ENCODE measurements at regions of chr15 and their contacts with region 1.

Region 1: DNA sequence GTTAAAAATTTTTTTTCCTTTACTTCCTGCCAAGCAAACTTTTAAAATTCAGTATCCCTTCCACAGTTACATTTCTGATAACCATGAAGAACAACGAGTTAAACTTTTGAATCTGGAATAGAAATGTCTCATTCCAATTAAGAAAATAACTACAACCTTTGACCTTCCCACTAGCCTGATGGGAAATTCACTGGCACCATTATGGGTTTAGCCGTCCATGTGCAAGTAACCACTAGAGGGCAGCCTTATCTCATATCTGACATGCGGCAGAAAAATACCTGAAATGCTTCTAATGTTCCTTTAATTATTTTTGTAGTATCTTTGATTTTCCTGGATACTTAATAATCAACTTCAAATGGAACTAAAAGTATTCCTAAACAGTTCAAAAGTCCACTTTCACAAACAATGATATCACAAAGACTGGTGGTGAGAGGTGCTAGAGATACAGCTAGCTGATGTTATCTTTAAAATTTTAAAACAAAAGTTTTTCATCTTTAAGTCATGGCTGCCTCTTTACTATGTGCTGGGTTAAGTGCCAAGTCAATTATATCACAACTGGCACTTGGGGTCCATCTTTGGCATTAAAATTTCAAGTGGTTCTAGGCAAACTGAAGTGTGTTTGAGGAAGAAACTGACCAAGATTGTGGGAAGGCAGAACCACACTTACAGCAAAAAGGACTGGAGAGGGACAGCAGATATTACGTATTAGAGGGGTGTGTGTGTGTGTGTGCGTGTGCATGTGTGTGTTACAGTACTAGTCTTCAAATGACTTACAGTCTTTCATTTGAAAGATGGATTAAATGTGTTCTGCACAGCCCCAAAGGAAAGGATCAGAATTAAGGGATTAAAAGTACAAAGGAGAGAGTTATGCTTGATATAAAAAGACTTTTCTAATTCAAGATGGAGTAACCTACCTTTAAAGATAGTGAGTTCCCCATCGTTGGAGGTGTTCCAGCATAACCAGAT is 107.1 kb upstream of the ICE2 start:
- DNase-seq: peak in 6 of 9 experiments; percentile 63 to 90 (median 66)
- ATAC-seq: peak; percentile 13
- H3K4me3 ChIP-seq: no peak overlapping the region
- H3K4me3 Mint-ChIP-seq: peak overlapping the region; percentile 77
- H3K27ac ChIP-seq: peak overlapping the region in 1 of 2 experiments; percentile 85
- H3K27ac Mint-ChIP-seq: peak overlapping the region; percentile 92
- H3K4me1 ChIP-seq: peaks cover 89% of the 10 kb centered on the region
- H3K4me1 Mint-ChIP-seq: peaks cover 91% of the 10 kb centered on the region
- H3K27me3 ChIP-seq: no peaks in the 10 kb centered on the region
- H3K27me3 Mint-ChIP-seq: no peaks in the 10 kb centered on the region
- CTCF ChIP-seq: peak; percentile 83

Region 2: GRCh38 chr15:59751552-59752413 is 834.2 kb before region 1 on chr15:
- CTCF ChIA-PET with region 1: no interaction called
- POLR2A ChIA-PET with region 1: no interaction called
- intact Hi-C with region 1: no loop called
- DNase-seq: peak in 2 of 9 experiments; percentile 69 to 81
- ATAC-seq: peak; percentile 98
- H3K4me3 ChIP-seq: no peak overlapping the region
- H3K4me3 Mint-ChIP-seq: no peak overlapping the region
- H3K27ac ChIP-seq: no peak overlapping the region
- H3K27ac Mint-ChIP-seq: peak overlapping the region; percentile 49
- H3K4me1 ChIP-seq: peaks cover 6% of the 10 kb centered on the region
- H3K4me1 Mint-ChIP-seq: peaks cover 9% of the 10 kb centered on the region
- H3K27me3 ChIP-seq: no peaks in the 10 kb centered on the region
- H3K27me3 Mint-ChIP-seq: peaks cover 3% of the 10 kb centered on the region
- CTCF ChIP-seq: peak; percentile 95

Region 3: GRCh38 chr15:59792359-59792758 is 793.7 kb before region 1 on chr15:
- CTCF ChIA-PET with region 1: no interaction called
- POLR2A ChIA-PET with region 1: no interaction called
- intact Hi-C with region 1: loop called in 1 of 2 experiments (anchors 10 kb)
- DNase-seq: peak in 7 of 9 experiments; percentile 37 to 68 (median 49)
- ATAC-seq: peak; percentile 75
- H3K4me3 ChIP-seq: peak overlapping the region in 1 of 2 experiments; percentile 40
- H3K4me3 Mint-ChIP-seq: peak overlapping the region; percentile 79
- H3K27ac ChIP-seq: peak overlapping the region; percentile 2 to 8
- H3K27ac Mint-ChIP-seq: peak overlapping the region; percentile 93
- H3K4me1 ChIP-seq: peaks cover 47% of the 10 kb centered on the region
- H3K4me1 Mint-ChIP-seq: peaks cover 61% of the 10 kb centered on the region
- H3K27me3 ChIP-seq: no peaks in the 10 kb centered on the region
- H3K27me3 Mint-ChIP-seq: no peaks in the 10 kb centered on the region
- CTCF ChIP-seq: no peak

Region 4: GRCh38 chr15:60526127-60526625 is 59.9 kb before region 1 on chr15:
- CTCF ChIA-PET with region 1: interaction called, 47 read pairs
- POLR2A ChIA-PET with region 1: interaction called, 14 read pairs
- intact Hi-C with region 1: loop called (anchors 2 to 5 kb)
- DNase-seq: peak in 4 of 9 experiments; percentile 33 to 76 (median 60)
- ATAC-seq: peak; percentile 55
- H3K4me3 ChIP-seq: no peak overlapping the region
- H3K4me3 Mint-ChIP-seq: no peak overlapping the region
- H3K27ac ChIP-seq: peak overlapping the region in 1 of 2 experiments; percentile 67
- H3K27ac Mint-ChIP-seq: peak overlapping the region; percentile 94
- H3K4me1 ChIP-seq: peaks cover 28% of the 10 kb centered on the region
- H3K4me1 Mint-ChIP-seq: peaks cover 76% of the 10 kb centered on the region
- H3K27me3 ChIP-seq: no peaks in the 10 kb centered on the region
- H3K27me3 Mint-ChIP-seq: no peaks in the 10 kb centered on the region
- CTCF ChIP-seq: no peak

Region 5: GRCh38 chr15:60557191-60557618 is 28.8 kb before region 1 on chr15:
- CTCF ChIA-PET with region 1: interaction called, 36 read pairs
- POLR2A ChIA-PET with region 1: interaction called, 8 read pairs
- intact Hi-C with region 1: no loop called
- DNase-seq: peak in 3 of 9 experiments; percentile 31 to 72 (median 57)
- ATAC-seq: peak; percentile 81
- H3K4me3 ChIP-seq: no peak overlapping the region
- H3K4me3 Mint-ChIP-seq: peak overlapping the region; percentile 42
- H3K27ac ChIP-seq: peak overlapping the region; percentile 4 to 57
- H3K27ac Mint-ChIP-seq: peak overlapping the region; percentile 85
- H3K4me1 ChIP-seq: peaks cover 57% of the 10 kb centered on the region
- H3K4me1 Mint-ChIP-seq: peaks cover 78% of the 10 kb centered on the region
- H3K27me3 ChIP-seq: no peaks in the 10 kb centered on the region
- H3K27me3 Mint-ChIP-seq: no peaks in the 10 kb centered on the region
- CTCF ChIP-seq: no peak

Region 6: DNA sequence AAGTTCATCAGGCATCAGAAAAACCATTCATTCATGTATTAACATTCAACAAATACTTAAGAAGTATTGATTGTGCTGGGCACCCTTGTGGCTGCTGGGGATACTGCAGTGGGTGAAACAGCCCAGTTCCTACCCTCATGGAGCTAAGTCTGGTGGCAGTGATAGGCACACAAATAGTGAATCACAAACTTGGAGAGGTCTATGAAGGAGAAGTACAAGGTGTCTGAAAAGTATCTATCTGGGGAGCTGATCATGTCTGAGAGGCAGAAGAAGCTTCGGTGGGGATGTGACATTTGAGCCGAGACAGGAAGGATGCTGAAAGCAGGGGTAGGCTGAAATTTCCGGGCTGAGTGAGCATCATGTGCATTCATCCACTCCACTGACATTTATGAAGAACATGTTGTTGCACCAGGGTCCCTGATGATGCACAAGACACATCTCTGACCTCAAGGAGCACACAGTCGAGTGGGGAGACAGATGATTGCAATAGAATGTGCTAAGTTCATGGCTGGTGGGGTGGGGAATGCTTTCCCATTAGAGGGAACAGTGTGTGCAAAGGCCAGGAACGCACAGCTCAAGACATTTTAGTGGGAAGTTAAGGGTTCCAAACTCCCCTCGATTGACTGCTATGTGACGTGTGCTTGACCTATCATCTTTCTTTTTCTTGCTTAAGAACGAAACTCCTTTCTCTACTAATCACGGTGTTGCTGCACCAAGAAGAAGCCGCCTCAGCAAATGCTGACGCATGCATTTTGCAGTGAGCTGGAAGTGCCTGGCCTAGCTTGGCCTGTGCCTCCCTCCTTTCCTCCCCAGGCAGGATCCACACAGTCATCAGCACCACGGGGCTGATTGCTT is 202.0 kb after region 1 on chr15:
- CTCF ChIA-PET with region 1: interaction called, 12 read pairs
- POLR2A ChIA-PET with region 1: no interaction called
- intact Hi-C with region 1: no loop called
- DNase-seq: peak in 6 of 9 experiments; percentile 27 to 53 (median 42)
- ATAC-seq: peak; percentile 76
- H3K4me3 ChIP-seq: no peak overlapping the region
- H3K4me3 Mint-ChIP-seq: peak overlapping the region; percentile 13
- H3K27ac ChIP-seq: no peak overlapping the region
- H3K27ac Mint-ChIP-seq: peak overlapping the region; percentile 74
- H3K4me1 ChIP-seq: peaks cover 5% of the 10 kb centered on the region
- H3K4me1 Mint-ChIP-seq: peaks cover 14% of the 10 kb centered on the region
- H3K27me3 ChIP-seq: no peaks in the 10 kb centered on the region
- H3K27me3 Mint-ChIP-seq: no peaks in the 10 kb centered on the region
- CTCF ChIP-seq: peak; percentile 50

Region 7: GRCh38 chr15:60905587-60905986 is 319.6 kb after region 1 on chr15:
- CTCF ChIA-PET with region 1: interaction called, 24 read pairs
- POLR2A ChIA-PET with region 1: interaction called, 3 read pairs
- intact Hi-C with region 1: no loop called
- DNase-seq: peak in 8 of 9 experiments; percentile 2 to 61 (median 34)
- ATAC-seq: peak; percentile 52
- H3K4me3 ChIP-seq: no peak overlapping the region
- H3K4me3 Mint-ChIP-seq: no peak overlapping the region
- H3K27ac ChIP-seq: no peak overlapping the region
- H3K27ac Mint-ChIP-seq: no peak overlapping the region
- H3K4me1 ChIP-seq: peaks cover 32% of the 10 kb centered on the region
- H3K4me1 Mint-ChIP-seq: peaks cover 31% of the 10 kb centered on the region
- H3K27me3 ChIP-seq: no peaks in the 10 kb centered on the region
- H3K27me3 Mint-ChIP-seq: no peaks in the 10 kb centered on the region
- CTCF ChIP-seq: no peak

Region 8: GRCh38 chr15:61099030-61099800 is 513.2 kb after region 1 on chr15:
- CTCF ChIA-PET with region 1: no interaction called
- POLR2A ChIA-PET with region 1: no interaction called
- intact Hi-C with region 1: no loop called
- DNase-seq: no peak
- ATAC-seq: no peak
- H3K4me3 ChIP-seq: no peak overlapping the region
- H3K4me3 Mint-ChIP-seq: no peak overlapping the region
- H3K27ac ChIP-seq: no peak overlapping the region
- H3K27ac Mint-ChIP-seq: no peak overlapping the region
- H3K4me1 ChIP-seq: no peaks in the 10 kb centered on the region
- H3K4me1 Mint-ChIP-seq: no peaks in the 10 kb centered on the region
- H3K27me3 ChIP-seq: no peaks in the 10 kb centered on the region
- H3K27me3 Mint-ChIP-seq: peaks cover 36% of the 10 kb centered on the region
- CTCF ChIP-seq: no peak

Region 9: DNA sequence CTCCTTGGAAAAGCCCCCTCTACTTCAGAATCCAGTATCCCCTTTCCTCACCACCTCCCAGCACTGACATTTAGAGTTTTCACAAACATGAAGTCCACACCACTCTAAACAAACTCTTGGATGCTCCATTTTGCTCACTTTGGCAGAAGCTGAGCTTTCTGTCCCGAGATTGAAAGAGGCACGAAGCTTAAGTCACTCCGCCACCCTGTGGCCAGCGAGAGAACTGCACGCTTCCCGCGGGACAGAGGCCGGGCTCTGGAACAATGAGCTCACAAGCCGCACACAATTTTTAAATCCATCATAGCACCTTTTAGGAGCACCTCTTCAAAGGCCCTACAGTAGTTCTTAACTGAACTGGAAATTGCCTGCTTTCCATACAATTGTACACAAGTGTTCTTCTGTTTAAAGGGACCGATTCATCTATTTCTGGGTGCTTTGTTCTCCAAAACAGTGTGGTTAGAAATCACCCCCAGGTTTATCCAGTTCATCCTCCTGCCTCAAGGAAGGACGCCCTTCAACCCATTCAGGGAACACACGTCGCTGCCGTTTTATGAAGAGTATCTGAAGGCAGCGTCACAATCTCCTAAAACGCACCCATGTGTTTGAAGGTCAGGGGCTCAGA is 1248.2 kb after region 1 on chr15:
- CTCF ChIA-PET with region 1: interaction called, 3 read pairs
- POLR2A ChIA-PET with region 1: no interaction called
- intact Hi-C with region 1: loop called in 1 of 2 experiments (anchors 5 kb)
- DNase-seq: peak; percentile 39 to 78 (median 71)
- ATAC-seq: peak; percentile 85
- H3K4me3 ChIP-seq: no peak overlapping the region
- H3K4me3 Mint-ChIP-seq: no peak overlapping the region
- H3K27ac ChIP-seq: no peak overlapping the region
- H3K27ac Mint-ChIP-seq: no peak overlapping the region
- H3K4me1 ChIP-seq: no peaks in the 10 kb centered on the region
- H3K4me1 Mint-ChIP-seq: peaks cover 8% of the 10 kb centered on the region
- H3K27me3 ChIP-seq: peaks cover 0 to 4% of the 10 kb centered on the region in 2 experiments
- H3K27me3 Mint-ChIP-seq: peaks cover 22% of the 10 kb centered on the region
- CTCF ChIP-seq: peak; percentile 90

Measured in CD8-positive, alpha-beta T cell (primary cell).